GM13976 (cell line): ENCODE measurements at regions of chr11 and their contacts with region 1.

Region 1: GRCh38 chr11:18540207-18541009 is 13.7 kb upstream of the TSG101 start:
- DNase-seq: peak; percentile 54
- CTCF ChIP-seq: peak; percentile 23

Region 2: DNA sequence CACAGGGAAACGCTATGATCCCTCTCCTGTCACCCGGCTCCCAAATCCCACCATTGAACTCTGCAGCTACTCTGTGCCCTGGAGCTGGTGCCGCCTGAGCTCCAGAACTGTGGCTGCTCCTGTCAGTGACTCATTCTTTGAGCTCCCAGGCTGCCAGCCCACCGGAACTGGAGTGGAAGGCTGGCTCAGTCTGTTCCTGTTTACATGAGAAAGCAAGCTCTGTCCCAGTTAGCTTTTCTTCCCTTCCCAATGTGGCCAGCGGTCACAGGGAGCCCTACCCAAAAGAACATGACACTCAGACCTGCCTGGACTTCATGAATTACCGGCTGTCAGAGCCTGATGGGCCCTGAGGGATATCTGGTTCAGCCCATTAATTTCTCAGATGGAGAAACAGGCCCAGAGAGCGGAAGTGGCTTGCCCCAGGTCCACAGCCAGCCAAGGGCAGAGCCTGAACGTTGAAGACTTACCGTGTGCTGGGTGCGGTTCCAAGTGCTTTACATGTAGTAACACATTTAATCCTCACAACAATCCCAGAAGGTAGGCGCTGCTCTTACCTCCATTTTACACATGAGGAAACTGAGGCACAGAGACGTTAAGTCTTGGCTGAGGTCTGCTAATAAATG is 209.4 kb after region 1 on chr11:
- in situ Hi-C with region 1: loop called (anchors 10 kb)
- DNase-seq: no peak
- CTCF ChIP-seq: no peak

Region 3: GRCh38 chr11:18994860-18995259 is 454.5 kb after region 1 on chr11:
- in situ Hi-C with region 1: no loop called
- DNase-seq: no peak
- CTCF ChIP-seq: no peak